Psoas muscle (tissue), 8 donors: ENCODE measurements at regions of chr7 and their contacts with region 1.

Region 1: GRCh38 chr7:5657901-5658300 is 123.6 kb downstream of the RNF216 start:
- DNase-seq: no peak
- ATAC-seq: no peak
- H3K4me3 ChIP-seq: no peak overlapping the region
- H3K27ac ChIP-seq: no peak overlapping the region
- H3K4me1 ChIP-seq: peaks cover 7% of the 10 kb centered on the region
- H3K27me3 ChIP-seq: no peaks in the 10 kb centered on the region
- CTCF ChIP-seq: no peak

Region 2: DNA sequence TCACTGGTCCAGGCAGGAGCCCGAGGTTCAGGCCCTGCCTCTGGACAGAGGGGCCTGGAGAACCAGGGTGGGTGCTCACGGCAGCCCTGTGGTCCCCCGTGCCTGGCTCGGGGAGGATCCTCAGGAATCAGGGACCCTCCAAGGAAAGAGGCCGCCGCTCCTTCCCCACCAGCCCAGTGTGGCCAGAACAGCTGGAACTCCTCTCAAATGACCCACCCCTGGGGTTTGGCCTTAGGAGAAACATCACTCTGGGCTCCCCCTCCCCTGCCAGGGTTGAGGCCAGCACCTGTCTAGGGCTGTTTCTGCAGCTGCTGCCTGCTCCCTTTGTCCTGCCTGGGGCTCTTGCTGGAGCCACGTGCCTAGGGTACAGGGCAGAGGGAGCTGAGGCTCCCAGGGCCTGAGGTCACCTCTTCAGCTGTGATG is 37.4 kb before region 1 on chr7:
- intact Hi-C with region 1: loop called in 1 of 2 experiments (anchors 5 kb)
- DNase-seq: peak in 1 of 2 donors; percentile 38
- ATAC-seq: peak in 2 of 4 donors; percentile 13 to 32
- H3K4me3 ChIP-seq: no peak overlapping the region
- H3K27ac ChIP-seq: no peak overlapping the region
- H3K4me1 ChIP-seq: no peaks in the 10 kb centered on the region
- H3K27me3 ChIP-seq: no peaks in the 10 kb centered on the region
- CTCF ChIP-seq: no peak